ENCODE measurements at regions of chr4 and their contacts with region 1.

Region 1: GRCh38 chr4:107423677-107424405 is 296.2 kb downstream of the PAPSS1 start:
- DNase-seq: no peak
- ATAC-seq: no peak

Region 2: DNA sequence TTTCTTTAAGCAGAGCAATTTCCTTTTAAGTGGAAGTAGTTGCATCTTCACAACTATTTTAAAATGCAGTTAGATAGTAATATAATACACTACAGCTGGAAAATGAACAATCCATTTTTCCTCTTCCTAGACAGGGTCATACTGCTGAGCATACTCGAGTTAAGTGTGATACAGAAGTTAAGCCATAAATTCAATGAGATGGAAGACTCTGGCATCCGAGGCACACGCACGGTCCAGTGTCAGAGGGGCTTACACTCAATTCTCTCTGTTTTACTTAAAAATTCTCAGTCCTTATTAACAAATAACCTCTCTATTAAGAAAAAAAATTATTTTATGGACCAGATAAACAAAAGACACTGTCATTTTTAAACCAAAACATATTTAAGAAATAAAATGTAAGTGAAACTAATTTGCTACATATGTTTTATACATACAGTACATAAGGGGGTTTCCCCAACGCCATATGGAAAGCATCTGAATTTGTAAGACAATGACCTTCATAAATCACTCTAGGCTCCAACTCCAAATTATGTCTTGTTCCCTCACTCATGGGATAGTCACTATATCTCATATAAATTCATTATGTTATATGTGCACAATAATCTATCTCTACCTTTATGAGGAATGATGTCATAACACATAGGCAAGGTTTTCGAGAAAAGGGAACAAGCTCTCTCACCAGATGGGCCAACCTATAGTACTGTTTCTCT is 19.1 kb before region 1 on chr4:
- intact Hi-C with region 1: loop called (anchors 1 kb)
- DNase-seq: no peak
- ATAC-seq: no peak

Region 3: DNA sequence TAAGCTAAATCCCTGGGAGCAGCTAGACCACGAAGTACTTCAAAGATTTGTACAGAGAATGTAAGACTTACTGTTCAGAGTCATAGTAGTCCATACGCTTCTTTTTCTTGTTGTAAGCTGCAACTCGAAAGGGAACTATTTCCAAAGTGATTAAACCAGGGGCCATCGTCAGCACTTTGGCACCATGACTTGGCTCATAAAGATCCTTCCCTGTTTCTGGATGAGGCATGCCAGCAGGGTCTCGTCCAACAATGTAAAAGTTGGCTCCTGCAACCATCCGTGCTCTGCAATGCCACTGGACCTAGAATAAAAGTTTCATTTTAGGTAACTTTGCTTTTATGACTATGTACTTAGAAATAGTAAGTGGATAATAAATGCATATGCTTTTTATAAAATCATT is 207.7 kb after region 1 on chr4:
- intact Hi-C with region 1: no loop called
- DNase-seq: no peak
- ATAC-seq: no peak

Measured in sciatic nerve (tissue), 2 donors.